ENCODE measurements at regions of chr11 and their contacts with region 1.

Region 1: DNA sequence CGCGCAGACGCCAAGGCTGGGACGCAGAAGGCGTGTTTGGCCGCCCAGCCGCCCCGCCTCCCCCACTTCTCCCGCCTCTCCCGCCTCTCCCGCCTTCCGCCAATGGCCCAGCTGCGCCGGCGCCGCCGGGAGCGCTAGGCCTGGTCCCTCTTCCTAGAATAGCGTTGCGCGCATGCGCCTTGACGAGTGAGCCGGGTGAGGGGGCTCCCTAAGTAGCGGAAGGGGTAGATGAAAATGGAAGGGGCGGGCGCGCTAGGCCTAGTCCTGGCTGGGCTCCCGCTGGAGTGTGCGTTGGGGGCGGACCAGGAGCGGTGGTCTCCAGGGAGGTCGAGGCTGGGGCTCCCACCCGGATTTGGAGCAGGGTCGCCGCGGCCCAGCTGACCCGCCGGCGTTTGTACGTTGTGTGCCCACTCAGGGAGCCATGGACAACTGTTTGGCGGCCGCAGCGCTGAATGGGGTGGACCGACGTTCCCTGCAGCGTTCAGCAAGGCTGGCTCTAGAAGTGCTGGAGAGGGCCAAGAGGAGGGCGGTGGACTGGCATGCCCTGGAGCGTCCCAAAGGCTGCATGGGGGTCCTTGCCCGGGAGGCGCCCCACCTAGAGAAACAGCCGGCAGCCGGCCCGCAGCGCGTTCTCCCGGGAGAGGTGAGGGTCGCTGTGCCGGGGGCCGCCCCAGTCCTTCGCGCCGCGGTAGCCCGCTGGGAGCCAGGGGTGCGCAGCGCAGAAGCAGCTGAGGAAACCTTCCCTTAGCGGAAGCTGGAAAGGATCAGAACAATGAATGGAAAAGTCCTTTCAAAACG is at the start of gene AKIP1:
- DNase-seq: peak; percentile 87 to 97 (median 94)
- H3K4me3 ChIP-seq: peak within 1 kb of the TSS; percentile 68 to 99 (median 93)
- H3K27ac ChIP-seq: peak within 1 kb of the TSS; percentile 81 to 98 (median 94)
- H3K27me3 ChIP-seq: no peaks in the 10 kb centered on the region
- CTCF ChIP-seq: peak in 11 of 56 donors; percentile 6 to 33 (median 16)
- total RNA-seq, gene AKIP1: 15.2 to 35.0 (median 22.7) TPM

Region 2: GRCh38 chr11:8682303-8683114 is 228.7 kb before region 1 on chr11 and contains the starts of genes RPL27A and TRIM66:
- intact Hi-C with region 1: loop called (anchors 5 kb)
- DNase-seq: peak; percentile 96 to 99 (median 98)
- H3K4me3 ChIP-seq: peak within 1 kb of the TSS; percentile 69 to 100 (median 95)
- H3K27ac ChIP-seq: peak within 1 kb of the TSS; percentile 63 to 98 (median 94)
- H3K27me3 ChIP-seq: no peaks in the 10 kb centered on the region
- CTCF ChIP-seq: peak in 41 of 56 donors; percentile 9 to 59 (median 35)
- total RNA-seq, gene RPL27A: 155 to 321 (median 208) TPM
- total RNA-seq, gene TRIM66: 9.2 to 31.7 (median 18.5) TPM

Region 3: GRCh38 chr11:8688414-8689362 is 222.5 kb before region 1 on chr11:
- intact Hi-C with region 1: loop called (anchors 5 kb)
- DNase-seq: peak; percentile 92 to 96 (median 94)
- H3K4me3 ChIP-seq: peak overlapping the region; percentile 57 to 96 (median 74)
- H3K27ac ChIP-seq: peak overlapping the region; percentile 17 to 96 (median 85)
- H3K27me3 ChIP-seq: no peaks in the 10 kb centered on the region
- CTCF ChIP-seq: peak in 52 of 56 donors; percentile 19 to 68 (median 47)

Region 4: GRCh38 chr11:8744423-8744822 is 166.8 kb before region 1 on chr11:
- intact Hi-C with region 1: no loop called
- DNase-seq: no peak
- H3K4me3 ChIP-seq: no peak overlapping the region
- H3K27ac ChIP-seq: no peak overlapping the region
- H3K27me3 ChIP-seq: no peaks in the 10 kb centered on the region
- CTCF ChIP-seq: no peak

Region 5: DNA sequence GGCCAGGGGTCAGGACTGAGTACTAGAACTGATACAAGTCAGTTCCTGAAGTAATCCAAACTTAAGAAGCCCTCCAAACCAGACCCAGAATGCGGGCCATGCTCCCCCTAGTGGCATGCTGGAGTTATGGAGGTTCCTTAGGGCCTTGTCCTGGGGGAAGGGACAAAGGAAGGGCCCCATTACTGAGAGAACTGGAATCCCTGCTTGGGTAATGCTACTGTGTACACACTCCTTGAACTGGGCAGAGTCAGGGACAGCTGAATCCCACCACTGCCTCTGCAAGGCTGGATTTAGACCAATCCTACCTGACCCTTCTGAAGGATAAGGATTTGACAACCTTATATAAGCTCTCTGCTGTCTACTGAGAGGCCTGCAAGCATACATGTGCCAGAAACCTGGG is 97.6 kb before region 1 on chr11:
- intact Hi-C with region 1: loop called in 1 of 2 experiments (anchors 10 kb)
- DNase-seq: peak; percentile 28 to 77 (median 63)
- H3K4me3 ChIP-seq: no peak overlapping the region
- H3K27ac ChIP-seq: peak overlapping the region in 17 of 59 donors; percentile 3 to 70 (median 34)
- H3K27me3 ChIP-seq: no peaks in the 10 kb centered on the region
- CTCF ChIP-seq: peak; percentile 49 to 93 (median 80)

Region 6: GRCh38 chr11:9053316-9054035 is 142.2 kb after region 1 on chr11:
- intact Hi-C with region 1: no loop called
- DNase-seq: no peak
- H3K4me3 ChIP-seq: no peak overlapping the region
- H3K27ac ChIP-seq: peak overlapping the region in 2 of 59 donors; percentile 2 to 31
- H3K27me3 ChIP-seq: no peaks in the 10 kb centered on the region
- CTCF ChIP-seq: no peak

Region 7: GRCh38 chr11:9137293-9138132 is 226.3 kb after region 1 on chr11:
- intact Hi-C with region 1: loop called in 1 of 2 experiments (anchors 5 kb)
- DNase-seq: peak; percentile 67 to 85 (median 80)
- H3K4me3 ChIP-seq: no peak overlapping the region
- H3K27ac ChIP-seq: peak overlapping the region in 51 of 59 donors; percentile 12 to 82 (median 57)
- H3K27me3 ChIP-seq: no peaks in the 10 kb centered on the region
- CTCF ChIP-seq: peak; percentile 53 to 96 (median 88)

Region 8: GRCh38 chr11:9347100-9347499 is 435.9 kb after region 1 on chr11:
- intact Hi-C with region 1: no loop called
- DNase-seq: no peak
- H3K4me3 ChIP-seq: no peak overlapping the region
- H3K27ac ChIP-seq: no peak overlapping the region
- H3K27me3 ChIP-seq: no peaks in the 10 kb centered on the region
- CTCF ChIP-seq: no peak

Region 9: GRCh38 chr11:9506489-9507276 is 595.5 kb after region 1 on chr11:
- intact Hi-C with region 1: loop called in 1 of 2 experiments (anchors 10 kb)
- DNase-seq: peak in 9 of 10 donors; percentile 35 to 80 (median 64)
- H3K4me3 ChIP-seq: no peak overlapping the region
- H3K27ac ChIP-seq: no peak overlapping the region
- H3K27me3 ChIP-seq: no peaks in the 10 kb centered on the region
- CTCF ChIP-seq: peak; percentile 71 to 97 (median 90)

Measured in dorsolateral prefrontal cortex (tissue), 120 donors.